HEK293 (cell line): ENCODE measurements at regions of chr1 and their contacts with region 1.

Region 1: DNA sequence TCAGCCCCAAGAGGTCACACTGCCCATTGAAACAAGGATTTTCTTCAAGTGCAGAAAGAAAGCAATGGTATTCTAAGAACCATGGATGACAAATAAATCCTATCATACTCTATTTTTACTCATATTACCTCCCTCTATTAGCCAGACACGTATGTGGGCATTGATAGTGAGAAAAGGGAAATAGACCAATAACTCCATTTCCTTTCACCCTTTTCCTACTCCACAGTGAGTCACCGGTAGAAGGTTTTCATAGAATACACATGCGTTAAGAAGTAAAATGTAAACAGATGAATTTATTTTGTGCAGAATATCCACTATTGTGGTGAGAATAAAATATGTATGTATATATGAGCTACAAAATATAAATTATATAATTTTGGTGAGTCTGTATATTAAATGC is 568.9 kb upstream of the ADGRL4 start:
- H3K4me3 ChIP-seq: no peak overlapping the region
- H3K27ac ChIP-seq: no peak overlapping the region
- H3K4me1 ChIP-seq: no peaks in the 10 kb centered on the region
- CTCF ChIP-seq: no peak

Region 2: DNA sequence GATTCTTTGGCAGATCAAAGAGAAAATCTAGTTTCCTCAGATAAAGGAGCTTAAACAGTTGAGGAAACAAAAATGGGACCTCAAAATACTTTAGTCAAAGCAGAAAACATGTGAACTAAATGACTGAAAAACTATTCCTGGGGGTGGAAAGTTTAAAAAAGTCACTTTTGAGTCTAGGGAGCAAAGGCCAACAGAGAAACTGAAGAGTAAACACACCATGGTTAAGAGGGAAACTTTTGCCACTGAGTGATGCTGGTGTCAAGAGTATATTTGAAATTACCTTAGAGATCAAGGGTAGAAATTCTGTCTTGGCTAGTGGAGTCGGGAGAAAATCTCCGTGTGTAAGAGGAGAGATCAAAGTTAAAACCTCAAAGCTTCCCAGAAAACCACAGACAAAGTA is 67.7 kb before region 1 on chr1:
- CTCF ChIA-PET with region 1: no interaction called
- POLR2A ChIA-PET with region 1: no interaction called
- H3K4me3 ChIP-seq: no peak overlapping the region
- H3K27ac ChIP-seq: no peak overlapping the region
- H3K4me1 ChIP-seq: no peaks in the 10 kb centered on the region
- CTCF ChIP-seq: no peak

Region 3: GRCh38 chr1:79551321-79551720 is 24.1 kb before region 1 on chr1:
- CTCF ChIA-PET with region 1: no interaction called
- POLR2A ChIA-PET with region 1: no interaction called
- H3K4me3 ChIP-seq: no peak overlapping the region
- H3K27ac ChIP-seq: no peak overlapping the region
- H3K4me1 ChIP-seq: no peaks in the 10 kb centered on the region
- CTCF ChIP-seq: no peak

Region 4: GRCh38 chr1:79595931-79596330 is 20.5 kb after region 1 on chr1:
- CTCF ChIA-PET with region 1: no interaction called
- POLR2A ChIA-PET with region 1: no interaction called
- H3K4me3 ChIP-seq: no peak overlapping the region
- H3K27ac ChIP-seq: no peak overlapping the region
- H3K4me1 ChIP-seq: no peaks in the 10 kb centered on the region
- CTCF ChIP-seq: no peak

Region 5: DNA sequence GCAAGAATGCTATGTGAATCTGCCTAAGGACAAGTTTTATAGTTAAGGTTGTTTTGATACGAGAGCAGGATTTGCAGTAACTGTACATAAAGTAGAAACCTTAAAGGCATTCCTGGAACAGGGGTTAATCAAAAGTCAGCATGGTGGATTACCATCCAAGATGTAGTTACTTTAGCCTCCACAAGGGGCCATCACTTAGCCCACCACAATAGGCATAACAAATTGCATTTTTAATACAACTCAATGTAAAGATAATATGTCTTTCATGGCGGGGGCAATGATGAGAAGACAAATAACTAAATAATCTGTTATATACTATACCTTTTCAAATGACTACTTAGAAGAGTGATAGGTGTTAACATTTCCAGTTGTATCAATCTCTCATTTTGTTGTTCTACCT is 42.4 kb after region 1 on chr1:
- CTCF ChIA-PET with region 1: no interaction called
- POLR2A ChIA-PET with region 1: interaction called, 14 read pairs
- H3K4me3 ChIP-seq: no peak overlapping the region
- H3K27ac ChIP-seq: no peak overlapping the region
- H3K4me1 ChIP-seq: no peaks in the 10 kb centered on the region
- CTCF ChIP-seq: no peak

Region 6: GRCh38 chr1:79777481-79778219 is 202.2 kb after region 1 on chr1:
- CTCF ChIA-PET with region 1: no interaction called
- POLR2A ChIA-PET with region 1: no interaction called
- H3K4me3 ChIP-seq: no peak overlapping the region
- H3K27ac ChIP-seq: no peak overlapping the region
- H3K4me1 ChIP-seq: no peaks in the 10 kb centered on the region
- CTCF ChIP-seq: no peak